Activated naive CD8-positive, alpha-beta T cell treated with anti-CD3 and anti-CD28 coated beads, Interleukin-2, amount 10 ng/mL, durations not matched to agents 7 days and 5 days (primary cell): ENCODE measurements at regions of chr1 and their contacts with region 1.

Region 1: GRCh38 chr1:113928941-113929749 is at the start of gene HIPK1:
- DNase-seq: peak; percentile 94
- ATAC-seq: peak; percentile 66
- H3K4me3 Mint-ChIP-seq: peak within 1 kb of the TSS; percentile 97
- H3K27ac Mint-ChIP-seq: peak within 1 kb of the TSS; percentile 99
- H3K4me1 Mint-ChIP-seq: peaks cover 39% of the 10 kb centered on the region
- H3K27me3 Mint-ChIP-seq: no peaks in the 10 kb centered on the region
- total RNA-seq, gene HIPK1: 93.0 to 99.4 TPM

Region 2: GRCh38 chr1:113871597-113872113 is 57.5 kb before region 1 on chr1 and contains the start of gene PTPN22:
- POLR2A ChIA-PET with region 1: interaction called, 36 read pairs
- DNase-seq: peak; percentile 71
- ATAC-seq: peak; percentile 80
- H3K4me3 Mint-ChIP-seq: peak within 1 kb of the TSS; percentile 88
- H3K27ac Mint-ChIP-seq: peak within 1 kb of the TSS; percentile 96
- H3K4me1 Mint-ChIP-seq: peaks cover 53% of the 10 kb centered on the region
- H3K27me3 Mint-ChIP-seq: no peaks in the 10 kb centered on the region
- total RNA-seq, gene PTPN22: 74.1 to 82.9 TPM

Region 3: GRCh38 chr1:113940365-113941244 is 11.5 kb after region 1 on chr1:
- POLR2A ChIA-PET with region 1: interaction called, 82 read pairs
- DNase-seq: peak; percentile 70
- ATAC-seq: peak; percentile 61
- H3K4me3 Mint-ChIP-seq: peak overlapping the region; percentile 84
- H3K27ac Mint-ChIP-seq: peak overlapping the region; percentile 86
- H3K4me1 Mint-ChIP-seq: peaks cover 64% of the 10 kb centered on the region
- H3K27me3 Mint-ChIP-seq: no peaks in the 10 kb centered on the region

Region 4: DNA sequence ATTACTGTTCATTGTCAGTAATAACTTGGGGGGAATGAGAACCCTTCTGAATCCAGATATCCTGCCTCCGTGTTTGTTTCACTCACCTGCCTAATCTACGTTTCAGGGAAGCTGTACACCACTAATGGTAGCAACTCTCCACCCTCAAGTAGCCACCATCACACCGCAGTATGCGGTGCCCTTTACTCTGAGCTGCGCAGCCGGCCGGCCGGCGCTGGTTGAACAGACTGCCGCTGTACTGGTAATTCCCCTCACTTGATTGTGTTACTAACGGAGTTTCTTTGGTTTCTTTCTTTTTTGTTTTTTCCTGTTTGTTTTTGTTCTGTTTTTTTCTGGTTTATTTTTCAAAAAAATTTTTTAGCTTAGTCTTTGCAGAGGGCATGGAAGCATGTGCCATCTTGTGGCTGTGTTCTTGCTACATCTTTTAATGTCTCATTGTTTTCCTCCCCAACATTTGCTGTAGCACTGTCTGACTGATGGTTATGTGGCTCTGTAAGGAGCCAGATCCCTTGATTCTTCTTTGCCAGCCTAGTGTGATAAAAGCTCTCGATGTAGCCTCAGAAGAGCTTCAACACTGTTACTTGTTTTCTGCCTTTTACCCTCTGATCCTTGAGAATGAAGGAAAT is 34.2 kb after region 1 on chr1:
- POLR2A ChIA-PET with region 1: interaction called, 23 read pairs
- DNase-seq: no peak
- ATAC-seq: no peak
- H3K4me3 Mint-ChIP-seq: no peak overlapping the region
- H3K27ac Mint-ChIP-seq: no peak overlapping the region
- H3K4me1 Mint-ChIP-seq: peaks cover 4% of the 10 kb centered on the region
- H3K27me3 Mint-ChIP-seq: no peaks in the 10 kb centered on the region